Calu3 (cell line): ENCODE measurements at regions of chr12 and their contacts with region 1.

Region 1: DNA sequence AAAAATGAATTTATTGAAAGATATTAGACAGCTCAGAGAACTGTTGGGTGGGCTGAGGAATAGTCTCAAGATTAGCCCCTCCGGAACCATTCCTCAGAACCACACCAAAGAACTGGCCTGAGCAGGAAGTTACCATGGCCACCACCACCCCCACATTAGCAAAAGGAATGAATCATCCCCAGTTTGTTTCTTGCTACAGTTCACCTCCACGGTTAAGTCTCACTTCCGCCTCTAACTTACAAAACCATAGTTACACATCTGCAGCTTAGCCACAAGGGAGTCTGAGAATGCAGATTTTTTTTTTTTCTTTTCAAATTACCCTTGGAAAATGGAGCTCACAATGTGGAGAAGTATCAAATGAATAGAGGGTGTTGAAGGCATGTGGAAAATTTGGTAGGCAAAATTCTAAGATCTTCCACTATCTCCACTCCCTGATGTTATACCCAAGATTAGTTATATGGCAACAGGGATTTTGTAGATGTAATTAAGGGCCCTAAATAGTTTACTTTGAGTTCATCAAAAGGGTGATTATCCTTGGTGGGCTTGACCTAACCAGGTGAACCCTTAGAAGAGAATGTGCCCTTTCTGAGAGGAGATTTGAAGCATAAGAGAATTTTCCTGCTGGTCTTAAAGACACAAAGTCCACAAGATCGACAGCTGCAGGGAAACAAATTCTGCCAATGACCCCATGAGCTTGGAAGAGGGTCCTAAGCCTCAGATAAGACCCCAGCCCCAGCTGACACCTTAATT is 129.8 kb upstream of the KRR1 start:
- DNase-seq: peak; percentile 83
- H3K4me3 Mint-ChIP-seq: peak overlapping the region; percentile 46
- H3K27ac Mint-ChIP-seq: peak overlapping the region; percentile 99
- H3K4me1 Mint-ChIP-seq: peaks cover 72% of the 10 kb centered on the region
- H3K27me3 Mint-ChIP-seq: no peaks in the 10 kb centered on the region
- CTCF ChIP-seq: no peak

Region 2: DNA sequence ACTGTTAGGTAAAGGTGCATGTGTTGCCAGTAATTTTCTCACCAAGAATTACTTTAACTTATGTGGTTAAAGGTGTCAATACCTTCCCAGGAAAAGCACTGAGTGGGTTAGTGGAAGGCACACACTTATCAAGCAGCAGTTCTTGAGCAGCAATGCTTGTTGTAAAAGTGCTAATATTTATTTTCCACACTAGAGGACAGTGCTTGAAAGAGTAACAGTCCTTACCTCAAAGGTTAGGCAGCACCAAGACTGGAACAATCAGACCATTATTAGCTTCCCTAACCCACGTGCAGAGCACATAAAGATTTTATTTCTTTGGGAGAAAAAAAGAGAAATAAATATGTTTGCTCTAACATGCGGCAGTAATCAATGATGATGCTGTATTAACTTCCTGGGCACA is 81.0 kb before region 1 on chr12:
- CTCF ChIA-PET with region 1: interaction called, 3 read pairs
- intact Hi-C with region 1: loop called (anchors 2 kb)
- DNase-seq: no peak
- H3K4me3 Mint-ChIP-seq: no peak overlapping the region
- H3K27ac Mint-ChIP-seq: no peak overlapping the region
- H3K4me1 Mint-ChIP-seq: peaks cover 17% of the 10 kb centered on the region
- H3K27me3 Mint-ChIP-seq: no peaks in the 10 kb centered on the region
- CTCF ChIP-seq: no peak

Region 3: GRCh38 chr12:75699728-75700496 is 58.7 kb after region 1 on chr12:
- CTCF ChIA-PET with region 1: no interaction called
- intact Hi-C with region 1: no loop called
- DNase-seq: no peak
- H3K4me3 Mint-ChIP-seq: no peak overlapping the region
- H3K27ac Mint-ChIP-seq: no peak overlapping the region
- H3K4me1 Mint-ChIP-seq: peaks cover 58% of the 10 kb centered on the region
- H3K27me3 Mint-ChIP-seq: no peaks in the 10 kb centered on the region
- CTCF ChIP-seq: no peak

Region 4: DNA sequence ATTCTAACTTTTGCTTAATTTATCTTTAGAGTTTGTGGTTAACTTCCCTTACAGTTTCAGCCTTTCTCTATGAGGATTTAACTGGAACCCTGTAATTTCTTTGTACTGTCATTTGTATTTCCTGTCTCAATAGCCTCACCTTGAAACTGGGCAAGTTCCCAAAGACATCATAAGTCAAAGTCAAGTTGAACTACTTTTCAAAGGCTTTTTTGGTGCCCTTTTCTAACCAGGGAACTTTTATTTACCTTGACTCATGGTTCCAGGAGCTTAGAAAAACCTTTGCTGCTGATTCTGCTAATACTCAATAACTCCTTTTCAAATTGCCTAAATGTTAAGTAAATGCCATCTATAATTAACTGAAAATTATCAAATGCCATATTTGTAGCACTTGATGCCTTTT is 71.0 kb after region 1 on chr12:
- CTCF ChIA-PET with region 1: interaction called, 4 read pairs
- intact Hi-C with region 1: loop called (anchors 5 kb)
- DNase-seq: peak; percentile 51
- H3K4me3 Mint-ChIP-seq: no peak overlapping the region
- H3K27ac Mint-ChIP-seq: peak overlapping the region; percentile 91
- H3K4me1 Mint-ChIP-seq: peaks cover 73% of the 10 kb centered on the region
- H3K27me3 Mint-ChIP-seq: no peaks in the 10 kb centered on the region
- CTCF ChIP-seq: no peak

Region 5: GRCh38 chr12:75766263-75767160 is 125.3 kb after region 1 on chr12:
- CTCF ChIA-PET with region 1: interaction called, 3 read pairs
- intact Hi-C with region 1: loop called (anchors 2 kb)
- DNase-seq: peak; percentile 63
- H3K4me3 Mint-ChIP-seq: no peak overlapping the region
- H3K27ac Mint-ChIP-seq: peak overlapping the region; percentile 73
- H3K4me1 Mint-ChIP-seq: peaks cover 60% of the 10 kb centered on the region
- H3K27me3 Mint-ChIP-seq: no peaks in the 10 kb centered on the region
- CTCF ChIP-seq: no peak

Region 6: GRCh38 chr12:76031537-76032073 is 390.4 kb after region 1 on chr12 and contains the start of gene PHLDA1:
- CTCF ChIA-PET with region 1: interaction called, 12 read pairs
- intact Hi-C with region 1: no loop called
- DNase-seq: peak; percentile 99
- H3K4me3 Mint-ChIP-seq: peak within 1 kb of the TSS; percentile 86
- H3K27ac Mint-ChIP-seq: peak within 1 kb of the TSS; percentile 98
- H3K4me1 Mint-ChIP-seq: peaks cover 38% of the 10 kb centered on the region
- H3K27me3 Mint-ChIP-seq: no peaks in the 10 kb centered on the region
- CTCF ChIP-seq: peak; percentile 43
- total RNA-seq, gene PHLDA1: 143 and 151 TPM in 2 replicates